Right cardiac atrium (tissue), 5 donors: ENCODE measurements at regions of chr3 and their contacts with region 1.

Region 1: DNA sequence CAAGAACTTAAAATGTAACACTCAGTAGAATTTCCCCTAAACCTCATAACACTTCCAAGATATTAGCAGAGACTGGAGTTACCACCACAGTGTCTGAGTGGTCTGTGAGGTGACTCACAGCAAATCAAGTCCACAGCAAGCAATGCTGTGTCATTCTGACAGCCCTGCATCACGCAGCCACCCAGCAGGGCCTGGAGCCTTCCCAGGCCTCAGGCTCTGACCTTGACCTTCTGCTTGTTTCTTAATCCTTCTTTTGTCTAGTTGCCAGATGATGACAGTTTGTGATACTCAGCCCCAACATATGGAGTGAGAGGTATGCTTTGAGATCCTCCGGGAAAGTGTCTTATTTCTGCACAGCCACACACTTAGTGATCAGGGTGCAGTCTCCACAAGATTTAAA is 82.5 kb downstream of the TOP2B start:
- DNase-seq: no peak
- ATAC-seq: no peak
- H3K4me3 ChIP-seq: no peak overlapping the region
- H3K27ac ChIP-seq: no peak overlapping the region
- H3K4me1 ChIP-seq: no peaks in the 10 kb centered on the region
- H3K27me3 ChIP-seq: no peaks in the 10 kb centered on the region

Region 2: DNA sequence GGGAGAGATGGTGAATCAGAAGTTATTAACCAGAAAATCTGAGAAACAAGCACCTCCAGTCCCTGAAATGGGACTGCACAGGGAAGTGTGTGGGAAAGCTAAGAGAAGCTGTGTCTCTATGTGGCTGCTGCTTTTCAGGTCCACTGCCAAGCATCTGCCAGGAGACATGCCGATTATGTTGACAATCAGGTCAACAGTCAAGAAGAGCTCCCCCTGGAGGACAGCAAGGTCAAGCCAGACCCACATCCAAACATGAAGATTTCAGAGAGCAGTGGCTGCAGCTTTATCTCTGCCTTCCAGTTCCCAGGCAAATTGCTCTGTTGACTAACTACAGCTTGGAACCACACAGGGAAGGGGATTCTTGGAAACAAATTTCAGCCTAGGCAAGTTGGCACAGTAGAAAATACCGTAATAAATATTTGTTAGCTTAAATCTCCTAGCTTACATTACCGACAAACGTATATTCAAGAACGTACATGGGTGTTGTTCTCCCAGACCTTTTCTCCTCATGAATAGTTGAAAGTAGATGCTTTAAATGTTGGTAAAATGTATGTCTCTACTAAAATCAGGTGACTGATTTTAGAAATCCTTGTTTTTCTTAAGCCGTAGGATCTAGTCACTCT is 548.7 kb before region 1 on chr3:
- intact Hi-C with region 1: loop called in 1 of 4 experiments (anchors 10 kb)
- DNase-seq: peak; percentile 46 to 71 (median 69)
- ATAC-seq: peak; percentile 70 to 78
- H3K4me3 ChIP-seq: no peak overlapping the region
- H3K27ac ChIP-seq: no peak overlapping the region
- H3K4me1 ChIP-seq: no peaks in the 10 kb centered on the region
- H3K27me3 ChIP-seq: no peaks in the 10 kb centered on the region

Region 3: GRCh38 chr3:25191673-25192072 is 390.6 kb before region 1 on chr3:
- intact Hi-C with region 1: no loop called
- DNase-seq: no peak
- ATAC-seq: no peak
- H3K4me3 ChIP-seq: no peak overlapping the region
- H3K27ac ChIP-seq: no peak overlapping the region
- H3K4me1 ChIP-seq: no peaks in the 10 kb centered on the region
- H3K27me3 ChIP-seq: no peaks in the 10 kb centered on the region

Region 4: GRCh38 chr3:25396686-25397085 is 185.6 kb before region 1 on chr3:
- intact Hi-C with region 1: no loop called
- DNase-seq: no peak
- ATAC-seq: no peak
- H3K4me3 ChIP-seq: no peak overlapping the region
- H3K27ac ChIP-seq: no peak overlapping the region
- H3K4me1 ChIP-seq: no peaks in the 10 kb centered on the region
- H3K27me3 ChIP-seq: no peaks in the 10 kb centered on the region

Region 5: GRCh38 chr3:25427942-25428788 is 154.1 kb before region 1 on chr3 and contains the start of gene RARB:
- intact Hi-C with region 1: loop called in 2 of 4 experiments (anchors 5 to 10 kb)
- DNase-seq: peak; percentile 71 to 87 (median 86)
- ATAC-seq: peak; percentile 93 to 94
- H3K4me3 ChIP-seq: peak within 1 kb of the TSS; percentile 91
- H3K27ac ChIP-seq: peak within 1 kb of the TSS; percentile 100
- H3K4me1 ChIP-seq: no peaks in the 10 kb centered on the region
- H3K27me3 ChIP-seq: no peaks in the 10 kb centered on the region
- total RNA-seq, gene RARB: 17.0 to 26.4 (median 24.7) TPM

Region 6: DNA sequence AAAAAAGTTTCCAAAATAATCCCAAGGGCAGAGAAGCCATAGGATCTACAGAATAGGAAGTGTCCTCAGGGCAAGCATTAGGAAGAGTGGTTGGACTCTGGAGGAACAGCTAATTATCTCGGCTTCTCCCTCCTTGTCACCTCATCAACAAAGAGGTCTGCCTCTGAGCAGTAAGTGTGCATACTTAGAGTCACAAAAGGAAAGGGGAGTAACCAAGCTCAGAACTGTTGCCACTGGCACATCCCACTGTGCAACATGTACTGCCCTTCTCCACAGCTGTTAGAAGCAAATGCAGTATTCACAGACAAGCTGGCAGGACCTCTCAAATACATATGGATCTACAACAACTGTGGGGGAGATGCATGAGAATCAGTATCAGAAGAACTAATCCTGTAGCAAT is 169.5 kb after region 1 on chr3:
- intact Hi-C with region 1: no loop called
- DNase-seq: no peak
- ATAC-seq: no peak
- H3K4me3 ChIP-seq: no peak overlapping the region
- H3K27ac ChIP-seq: no peak overlapping the region
- H3K4me1 ChIP-seq: no peaks in the 10 kb centered on the region
- H3K27me3 ChIP-seq: no peaks in the 10 kb centered on the region

Region 7: GRCh38 chr3:25897019-25897418 is 314.8 kb after region 1 on chr3:
- intact Hi-C with region 1: no loop called
- DNase-seq: no peak
- ATAC-seq: peak in 1 of 2 donors; percentile 40
- H3K4me3 ChIP-seq: no peak overlapping the region
- H3K27ac ChIP-seq: no peak overlapping the region
- H3K4me1 ChIP-seq: no peaks in the 10 kb centered on the region
- H3K27me3 ChIP-seq: no peaks in the 10 kb centered on the region